Caco-2 (cell line): ENCODE measurements at regions of chr9 and their contacts with region 1.

Region 1: GRCh38 chr9:129783516-129784361 is 19.2 kb upstream of the TOR1B start:
- DNase-seq: peak; percentile 70 to 82
- H3K4me3 ChIP-seq: no peak overlapping the region
- H3K4me3 Mint-ChIP-seq: no peak overlapping the region
- H3K27ac Mint-ChIP-seq: no peak overlapping the region
- H3K4me1 ChIP-seq: peaks cover 7% of the 10 kb centered on the region
- H3K4me1 Mint-ChIP-seq: no peaks in the 10 kb centered on the region
- H3K27me3 ChIP-seq: no peaks in the 10 kb centered on the region
- H3K27me3 Mint-ChIP-seq: peaks cover 13% of the 10 kb centered on the region
- CTCF ChIP-seq: peak; percentile 89 to 91

Region 2: DNA sequence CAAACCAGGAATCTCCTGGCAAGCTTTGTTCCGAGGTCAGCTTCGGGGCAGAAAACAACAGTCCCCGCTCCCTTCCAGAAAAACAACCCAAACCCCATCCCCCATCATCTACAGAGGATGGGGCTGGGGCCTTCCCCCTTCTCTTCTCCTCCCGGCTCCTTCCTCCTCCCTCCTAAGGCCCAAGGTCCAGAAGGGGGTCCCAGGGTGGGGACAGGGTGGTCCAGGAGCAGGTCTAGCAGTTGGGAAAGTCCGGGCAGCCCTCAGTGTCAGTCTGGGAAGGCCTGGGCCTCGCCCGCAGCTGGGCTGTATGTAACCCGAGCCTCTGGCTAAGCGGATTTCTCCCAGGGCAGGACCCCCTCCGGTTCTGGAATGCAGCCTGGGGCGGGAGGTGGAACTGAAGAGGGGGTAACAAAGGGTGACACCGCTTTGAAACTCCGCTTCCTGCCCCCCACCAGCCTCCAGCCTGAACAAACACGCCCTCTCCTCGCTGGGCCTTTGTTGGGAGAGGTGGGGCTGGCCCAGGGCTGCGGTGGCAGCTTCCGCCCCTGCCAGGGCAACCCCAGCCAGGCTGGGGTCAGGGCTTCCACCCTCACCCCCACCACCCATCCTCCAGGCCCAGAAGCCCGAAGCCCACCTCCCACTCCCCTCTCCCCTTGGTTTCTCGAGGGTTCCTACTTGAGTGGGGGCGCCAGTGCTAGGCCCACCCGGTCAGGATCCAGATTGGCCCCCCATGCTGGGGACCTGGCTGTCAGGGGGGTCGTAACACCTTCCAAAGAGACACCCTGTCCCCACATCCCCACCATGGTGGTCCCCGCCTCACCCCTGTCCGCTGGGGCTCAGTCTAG is 226.3 kb before region 1 on chr9:
- CTCF ChIA-PET with region 1: no interaction called
- POLR2A ChIA-PET with region 1: no interaction called
- intact Hi-C with region 1: no loop called
- DNase-seq: peak; percentile 74 to 92
- H3K4me3 ChIP-seq: no peak overlapping the region
- H3K4me3 Mint-ChIP-seq: peak overlapping the region; percentile 4
- H3K27ac Mint-ChIP-seq: peak overlapping the region; percentile 73
- H3K4me1 ChIP-seq: peaks cover 43% of the 10 kb centered on the region
- H3K4me1 Mint-ChIP-seq: peaks cover 36% of the 10 kb centered on the region
- H3K27me3 ChIP-seq: no peaks in the 10 kb centered on the region
- H3K27me3 Mint-ChIP-seq: no peaks in the 10 kb centered on the region
- CTCF ChIP-seq: no peak

Region 3: GRCh38 chr9:129641746-129642513 is 141.8 kb before region 1 on chr9 and contains the start of gene ASB6:
- CTCF ChIA-PET with region 1: interaction called, 7 read pairs
- POLR2A ChIA-PET with region 1: no interaction called
- intact Hi-C with region 1: loop called (anchors 1 kb)
- DNase-seq: peak; percentile 97 to 100
- H3K4me3 ChIP-seq: peak within 1 kb of the TSS; percentile 99
- H3K4me3 Mint-ChIP-seq: peak within 1 kb of the TSS; percentile 89
- H3K27ac Mint-ChIP-seq: peak within 1 kb of the TSS; percentile 85
- H3K4me1 ChIP-seq: peaks cover 3% of the 10 kb centered on the region; the same call in 1 of the 2 replicates
- H3K4me1 Mint-ChIP-seq: peaks cover 6% of the 10 kb centered on the region
- H3K27me3 ChIP-seq: no peaks in the 10 kb centered on the region
- H3K27me3 Mint-ChIP-seq: no peaks in the 10 kb centered on the region
- CTCF ChIP-seq: peak; percentile 82 to 94
- total RNA-seq, gene ASB6: 17.4 and 18.1 TPM in 2 replicates

Region 4: GRCh38 chr9:129875181-129875611 is 91.5 kb after region 1 on chr9:
- CTCF ChIA-PET with region 1: no interaction called
- POLR2A ChIA-PET with region 1: no interaction called
- intact Hi-C with region 1: no loop called
- DNase-seq: no peak
- H3K4me3 ChIP-seq: no peak overlapping the region
- H3K4me3 Mint-ChIP-seq: no peak overlapping the region
- H3K27ac Mint-ChIP-seq: no peak overlapping the region
- H3K4me1 ChIP-seq: no peaks in the 10 kb centered on the region
- H3K4me1 Mint-ChIP-seq: no peaks in the 10 kb centered on the region
- H3K27me3 ChIP-seq: no peaks in the 10 kb centered on the region
- H3K27me3 Mint-ChIP-seq: no peaks in the 10 kb centered on the region
- CTCF ChIP-seq: peak in 1 of 2 experiments; percentile 15

Region 5: DNA sequence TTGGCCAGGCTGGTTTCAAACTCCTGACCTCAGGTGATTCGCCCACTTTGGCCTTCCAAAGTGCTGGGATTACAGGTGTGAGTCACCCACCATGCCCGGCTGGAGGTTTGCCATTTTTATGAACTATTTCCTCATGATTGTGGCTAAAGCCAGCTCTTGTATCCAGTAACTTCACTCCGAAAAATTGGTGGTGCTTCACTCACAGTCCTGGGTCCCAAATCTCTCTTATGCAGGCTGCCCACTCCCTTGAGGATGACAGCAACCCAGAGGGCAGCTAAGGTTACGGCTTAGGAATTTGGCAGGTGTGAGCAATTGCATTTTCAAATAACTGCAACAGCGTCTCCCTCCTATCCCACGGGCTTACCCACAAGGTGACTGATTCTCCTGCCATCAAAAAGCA is 772.2 kb after region 1 on chr9:
- CTCF ChIA-PET with region 1: no interaction called
- POLR2A ChIA-PET with region 1: no interaction called
- intact Hi-C with region 1: no loop called
- DNase-seq: no peak
- H3K4me3 ChIP-seq: no peak overlapping the region
- H3K4me3 Mint-ChIP-seq: no peak overlapping the region
- H3K27ac Mint-ChIP-seq: no peak overlapping the region
- H3K4me1 ChIP-seq: 0 out of 2 replicates have a peak, but pooled peaks cover 3% of the 10 kb centered on the region
- H3K4me1 Mint-ChIP-seq: peaks cover 6% of the 10 kb centered on the region
- H3K27me3 ChIP-seq: no peaks in the 10 kb centered on the region
- H3K27me3 Mint-ChIP-seq: peaks cover 4% of the 10 kb centered on the region
- CTCF ChIP-seq: no peak